CD4-positive, alpha-beta T cell (primary cell): ENCODE measurements at regions of chr1 and their contacts with region 1.

Region 1: DNA sequence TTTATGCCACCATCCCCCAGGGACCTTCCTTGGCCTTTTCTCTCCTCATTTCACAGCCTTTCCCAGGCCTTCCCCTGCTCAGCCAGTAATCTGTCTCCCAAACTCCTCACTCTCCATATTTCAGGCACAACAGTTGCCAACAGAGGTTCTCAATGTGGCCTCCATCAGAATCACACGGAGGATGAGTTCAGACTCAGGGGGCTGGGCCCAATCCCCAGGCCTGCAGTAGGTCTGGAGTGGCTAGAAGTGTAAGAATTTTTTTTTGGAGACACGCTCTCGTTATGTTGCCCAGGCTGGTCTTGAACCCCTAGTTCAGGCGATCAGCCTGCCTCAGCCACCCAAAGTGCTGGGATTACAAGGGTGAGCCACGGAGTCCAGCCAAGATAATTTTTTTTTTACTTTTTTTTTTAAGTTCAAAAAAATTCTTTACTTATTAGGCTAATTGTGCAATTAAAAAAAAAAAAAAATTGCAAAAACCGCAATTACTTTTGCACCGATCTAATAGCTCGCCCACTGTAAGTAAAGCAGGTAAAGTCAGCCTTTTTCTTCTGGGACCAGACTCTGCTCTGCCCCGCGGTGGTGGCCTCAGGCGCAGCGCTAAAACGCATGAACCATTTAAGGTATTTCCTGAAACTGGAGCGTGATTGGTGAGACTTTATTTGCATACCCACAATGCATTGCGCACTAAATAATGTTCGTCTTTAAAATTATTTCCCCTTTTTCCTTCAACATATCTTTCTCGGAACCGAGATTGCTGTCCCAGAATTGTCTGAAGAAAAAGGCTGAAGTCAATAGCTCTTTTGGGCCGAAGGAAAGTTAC is 18.7 kb downstream of the KIAA2013 start:
- DNase-seq: peak; percentile 80 to 97 (median 88)
- ATAC-seq: peak; percentile 67
- H3K4me3 ChIP-seq: peak overlapping the region; percentile 90
- H3K4me3 Mint-ChIP-seq: peak overlapping the region; percentile 91
- H3K27ac ChIP-seq: peak overlapping the region; percentile 86 to 97
- H3K27ac Mint-ChIP-seq: peak overlapping the region; percentile 100
- H3K4me1 ChIP-seq: peaks cover 36% of the 10 kb centered on the region
- H3K4me1 Mint-ChIP-seq: peaks cover 41% of the 10 kb centered on the region
- H3K27me3 ChIP-seq: peaks cover 6% of the 10 kb centered on the region in 2 experiments
- H3K27me3 Mint-ChIP-seq: peaks cover 20% of the 10 kb centered on the region
- CTCF ChIP-seq: peak; percentile 81

Region 2: DNA sequence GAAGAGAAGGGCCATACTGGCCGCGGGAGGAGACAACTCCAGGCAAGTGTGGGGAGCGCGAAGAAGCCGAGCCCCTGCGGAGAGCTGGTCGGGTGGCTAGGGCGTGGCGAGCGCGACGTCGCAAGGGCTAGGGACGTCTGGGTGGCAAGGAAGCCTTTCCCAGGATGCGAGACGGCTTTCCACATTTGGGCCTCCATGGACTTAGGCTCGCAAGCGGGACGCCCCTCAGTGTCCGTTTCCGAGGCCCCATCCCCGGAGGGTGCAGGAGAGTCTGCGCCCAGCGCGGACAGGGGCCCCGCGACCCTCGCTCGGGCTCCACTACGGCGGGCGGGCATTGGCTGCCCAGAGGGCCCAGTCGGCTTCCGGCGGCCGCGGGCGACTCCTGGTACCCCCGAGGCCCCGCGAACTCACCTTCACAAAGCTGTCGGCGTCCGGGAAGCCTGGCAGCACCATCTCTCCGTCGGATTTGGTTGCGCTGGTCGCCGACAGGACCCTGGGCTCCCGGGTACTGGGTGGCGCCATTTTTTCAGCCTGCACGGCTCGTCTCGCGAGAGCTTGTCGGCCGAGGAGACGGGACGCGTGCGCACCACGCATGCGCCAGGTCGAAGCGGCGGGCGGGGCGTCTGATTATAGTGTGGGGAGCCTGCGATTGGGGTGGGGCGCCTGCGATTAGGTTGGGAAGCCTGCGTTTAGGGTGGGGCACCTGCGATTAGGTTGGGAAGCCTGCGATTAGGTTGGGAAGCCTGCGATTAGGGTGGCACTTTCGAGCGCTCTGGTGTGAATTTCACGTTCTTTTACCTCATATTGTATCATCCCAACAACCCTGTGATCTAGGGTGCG is 808.0 kb before region 1 on chr1 and contains the start of gene EXOSC10:
- CTCF ChIA-PET with region 1: no interaction called
- POLR2A ChIA-PET with region 1: interaction called, 10 read pairs
- intact Hi-C with region 1: no loop called
- DNase-seq: peak; percentile 90 to 97 (median 94)
- ATAC-seq: peak; percentile 98
- H3K4me3 ChIP-seq: peak within 1 kb of the TSS; percentile 92
- H3K4me3 Mint-ChIP-seq: peak within 1 kb of the TSS; percentile 99
- H3K27ac ChIP-seq: peak within 1 kb of the TSS; percentile 50 to 66
- H3K27ac Mint-ChIP-seq: peak within 1 kb of the TSS; percentile 93
- H3K4me1 ChIP-seq: peaks cover 12% of the 10 kb centered on the region
- H3K4me1 Mint-ChIP-seq: peaks cover 21% of the 10 kb centered on the region
- H3K27me3 ChIP-seq: no peaks in the 10 kb centered on the region
- H3K27me3 Mint-ChIP-seq: no peaks in the 10 kb centered on the region
- CTCF ChIP-seq: no peak
- total RNA-seq, gene EXOSC10: 81.6 to 89.0 TPM

Region 3: DNA sequence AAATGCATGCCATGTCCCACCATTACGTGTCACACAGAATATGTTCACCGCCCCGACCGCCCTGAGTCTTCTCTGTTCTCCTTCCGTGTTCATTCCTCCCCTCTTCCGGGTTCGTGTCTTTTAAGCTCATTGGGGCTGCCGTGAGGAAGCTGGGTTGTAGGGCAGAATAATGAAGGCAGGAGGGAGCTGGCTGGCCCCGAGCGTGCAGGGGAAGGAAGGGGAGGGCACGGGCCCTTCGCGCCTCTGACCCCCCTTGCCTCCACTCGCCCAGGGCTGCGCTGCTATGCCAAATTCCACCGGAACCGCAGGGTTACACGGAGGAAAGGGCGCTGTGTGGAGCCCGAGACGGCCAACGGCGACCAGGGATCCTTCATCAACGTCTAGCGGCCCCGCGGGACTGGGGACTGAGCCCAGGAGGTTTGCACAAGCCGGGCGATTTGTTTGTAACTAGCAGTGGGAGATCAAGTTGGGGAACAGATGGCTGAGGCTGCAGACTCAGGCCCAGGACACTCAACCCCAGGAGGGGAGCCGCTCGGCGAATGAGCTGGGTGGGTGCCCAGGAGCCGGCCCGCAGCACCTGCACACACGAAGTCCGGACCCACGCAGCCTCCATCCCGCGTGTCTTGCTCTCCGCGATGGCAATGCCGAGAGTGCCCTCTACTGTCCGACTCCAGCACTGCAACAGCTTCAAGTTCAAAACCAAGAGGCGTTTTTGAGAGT is 188.0 kb before region 1 on chr1:
- CTCF ChIA-PET with region 1: no interaction called
- POLR2A ChIA-PET with region 1: interaction called, 10 read pairs
- intact Hi-C with region 1: no loop called
- DNase-seq: peak; percentile 80 to 94 (median 88)
- ATAC-seq: peak; percentile 89
- H3K4me3 ChIP-seq: peak overlapping the region; percentile 54
- H3K4me3 Mint-ChIP-seq: peak overlapping the region; percentile 86
- H3K27ac ChIP-seq: peak overlapping the region; percentile 15 to 64
- H3K27ac Mint-ChIP-seq: peak overlapping the region; percentile 86
- H3K4me1 ChIP-seq: peaks cover 18% of the 10 kb centered on the region
- H3K4me1 Mint-ChIP-seq: peaks cover 17% of the 10 kb centered on the region
- H3K27me3 ChIP-seq: no peaks in the 10 kb centered on the region
- H3K27me3 Mint-ChIP-seq: no peaks in the 10 kb centered on the region
- CTCF ChIP-seq: peak; percentile 96

Region 4: GRCh38 chr1:11838349-11839272 is 68.9 kb before region 1 on chr1:
- CTCF ChIA-PET with region 1: interaction called, 15 read pairs
- POLR2A ChIA-PET with region 1: interaction called, 35 read pairs
- intact Hi-C with region 1: loop called (anchors 1 to 5 kb)
- DNase-seq: peak; percentile 55 to 84 (median 70)
- ATAC-seq: peak; percentile 98
- H3K4me3 ChIP-seq: no peak overlapping the region
- H3K4me3 Mint-ChIP-seq: no peak overlapping the region
- H3K27ac ChIP-seq: no peak overlapping the region
- H3K27ac Mint-ChIP-seq: no peak overlapping the region
- H3K4me1 ChIP-seq: peaks cover 4% of the 10 kb centered on the region
- H3K4me1 Mint-ChIP-seq: peaks cover 5% of the 10 kb centered on the region
- H3K27me3 ChIP-seq: no peaks in the 10 kb centered on the region
- H3K27me3 Mint-ChIP-seq: no peaks in the 10 kb centered on the region
- CTCF ChIP-seq: peak; percentile 99

Region 5: DNA sequence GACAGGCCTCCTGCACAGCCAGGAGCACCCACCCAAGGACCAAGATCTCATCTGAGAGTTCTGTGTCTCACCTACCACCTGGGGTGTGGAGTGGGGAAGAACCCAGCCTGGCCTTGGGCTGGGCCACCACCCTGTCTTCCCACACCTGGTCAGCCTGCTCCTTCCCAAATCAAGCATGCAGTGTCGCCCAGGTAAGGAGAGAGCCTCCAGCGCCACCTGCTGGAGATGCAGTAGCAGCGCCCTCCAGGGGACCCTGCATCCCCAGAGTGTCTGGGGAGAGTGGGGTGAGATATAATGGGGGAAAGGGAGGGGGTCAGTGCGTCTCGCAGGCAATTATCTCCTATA is 13.6 kb before region 1 on chr1:
- CTCF ChIA-PET with region 1: no interaction called
- POLR2A ChIA-PET with region 1: interaction called, 16 read pairs
- intact Hi-C with region 1: no loop called
- DNase-seq: peak; percentile 52 to 81 (median 64)
- ATAC-seq: peak; percentile 91
- H3K4me3 ChIP-seq: no peak overlapping the region
- H3K4me3 Mint-ChIP-seq: no peak overlapping the region
- H3K27ac ChIP-seq: no peak overlapping the region
- H3K27ac Mint-ChIP-seq: no peak overlapping the region
- H3K4me1 ChIP-seq: no peaks in the 10 kb centered on the region
- H3K4me1 Mint-ChIP-seq: no peaks in the 10 kb centered on the region
- H3K27me3 ChIP-seq: peaks cover 19 to 28% of the 10 kb centered on the region in 2 experiments
- H3K27me3 Mint-ChIP-seq: peaks cover 44% of the 10 kb centered on the region
- CTCF ChIP-seq: peak; percentile 83

Region 6: GRCh38 chr1:11934302-11935056 is 27.0 kb after region 1 on chr1 and contains the start of gene PLOD1:
- CTCF ChIA-PET with region 1: interaction called, 3 read pairs
- POLR2A ChIA-PET with region 1: interaction called, 35 read pairs
- intact Hi-C with region 1: no loop called
- DNase-seq: peak; percentile 72 to 94 (median 87)
- ATAC-seq: peak; percentile 100
- H3K4me3 ChIP-seq: peak within 1 kb of the TSS; percentile 64
- H3K4me3 Mint-ChIP-seq: peak within 1 kb of the TSS; percentile 85
- H3K27ac ChIP-seq: no peak within 1 kb of the TSS
- H3K27ac Mint-ChIP-seq: no peak within 1 kb of the TSS
- H3K4me1 ChIP-seq: peaks cover 16% of the 10 kb centered on the region
- H3K4me1 Mint-ChIP-seq: no peaks in the 10 kb centered on the region
- H3K27me3 ChIP-seq: no peaks in the 10 kb centered on the region
- H3K27me3 Mint-ChIP-seq: no peaks in the 10 kb centered on the region
- CTCF ChIP-seq: no peak
- total RNA-seq, gene PLOD1: 1.6 to 1.8 TPM

Region 7: GRCh38 chr1:11948822-11949458 is 41.5 kb after region 1 on chr1:
- CTCF ChIA-PET with region 1: no interaction called
- POLR2A ChIA-PET with region 1: no interaction called
- intact Hi-C with region 1: no loop called
- DNase-seq: no peak
- ATAC-seq: no peak
- H3K4me3 ChIP-seq: no peak overlapping the region
- H3K4me3 Mint-ChIP-seq: no peak overlapping the region
- H3K27ac ChIP-seq: no peak overlapping the region
- H3K27ac Mint-ChIP-seq: no peak overlapping the region
- H3K4me1 ChIP-seq: no peaks in the 10 kb centered on the region
- H3K4me1 Mint-ChIP-seq: no peaks in the 10 kb centered on the region
- H3K27me3 ChIP-seq: no peaks in the 10 kb centered on the region
- H3K27me3 Mint-ChIP-seq: no peaks in the 10 kb centered on the region
- CTCF ChIP-seq: no peak

Region 8: GRCh38 chr1:12150456-12151200 is 243.1 kb after region 1 on chr1:
- CTCF ChIA-PET with region 1: interaction called, 3 read pairs
- POLR2A ChIA-PET with region 1: interaction called, 24 read pairs
- intact Hi-C with region 1: no loop called
- DNase-seq: peak in 6 of 14 experiments; percentile 25 to 84 (median 60)
- ATAC-seq: peak; percentile 84
- H3K4me3 ChIP-seq: peak overlapping the region; percentile 37
- H3K4me3 Mint-ChIP-seq: peak overlapping the region; percentile 83
- H3K27ac ChIP-seq: peak overlapping the region; percentile 58 to 87
- H3K27ac Mint-ChIP-seq: peak overlapping the region; percentile 96
- H3K4me1 ChIP-seq: peaks cover 95% of the 10 kb centered on the region
- H3K4me1 Mint-ChIP-seq: peaks cover 88% of the 10 kb centered on the region
- H3K27me3 ChIP-seq: no peaks in the 10 kb centered on the region
- H3K27me3 Mint-ChIP-seq: no peaks in the 10 kb centered on the region
- CTCF ChIP-seq: no peak